Activated CD4-positive, alpha-beta T cell treated with anti-CD3 and anti-CD28 coated beads, Interleukin-2, amount 10 ng/mL, durations not matched to agents 24 days and 14 days (primary cell): ENCODE measurements at regions of chr11 and their contacts with region 1.

Region 1: GRCh38 chr11:102940714-102941588 is 14.6 kb downstream of the MMP13 start:
- DNase-seq: peak; percentile 81
- H3K4me3 Mint-ChIP-seq: no peak overlapping the region
- H3K27ac Mint-ChIP-seq: no peak overlapping the region
- H3K4me1 Mint-ChIP-seq: peaks cover 2% of the 10 kb centered on the region
- H3K27me3 Mint-ChIP-seq: peaks cover 11% of the 10 kb centered on the region

Region 2: GRCh38 chr11:102733232-102733875 is 207.6 kb before region 1 on chr11:
- intact Hi-C with region 1: loop called (anchors 1 kb)
- DNase-seq: peak; percentile 83
- H3K4me3 Mint-ChIP-seq: no peak overlapping the region
- H3K27ac Mint-ChIP-seq: no peak overlapping the region
- H3K4me1 Mint-ChIP-seq: no peaks in the 10 kb centered on the region
- H3K27me3 Mint-ChIP-seq: peaks cover 18% of the 10 kb centered on the region

Region 3: GRCh38 chr11:102807921-102808320 is 133.0 kb before region 1 on chr11:
- intact Hi-C with region 1: loop called (anchors 10 kb)
- DNase-seq: peak; percentile 61
- H3K4me3 Mint-ChIP-seq: no peak overlapping the region
- H3K27ac Mint-ChIP-seq: no peak overlapping the region
- H3K4me1 Mint-ChIP-seq: no peaks in the 10 kb centered on the region
- H3K27me3 Mint-ChIP-seq: peaks cover 12% of the 10 kb centered on the region

Region 4: GRCh38 chr11:102886999-102887398 is 54.0 kb before region 1 on chr11:
- intact Hi-C with region 1: no loop called
- DNase-seq: no peak
- H3K4me3 Mint-ChIP-seq: no peak overlapping the region
- H3K27ac Mint-ChIP-seq: no peak overlapping the region
- H3K4me1 Mint-ChIP-seq: peaks cover 4% of the 10 kb centered on the region
- H3K27me3 Mint-ChIP-seq: peaks cover 2% of the 10 kb centered on the region